ENCODE measurements at regions of chr19 and their contacts with region 1.

Region 1: DNA sequence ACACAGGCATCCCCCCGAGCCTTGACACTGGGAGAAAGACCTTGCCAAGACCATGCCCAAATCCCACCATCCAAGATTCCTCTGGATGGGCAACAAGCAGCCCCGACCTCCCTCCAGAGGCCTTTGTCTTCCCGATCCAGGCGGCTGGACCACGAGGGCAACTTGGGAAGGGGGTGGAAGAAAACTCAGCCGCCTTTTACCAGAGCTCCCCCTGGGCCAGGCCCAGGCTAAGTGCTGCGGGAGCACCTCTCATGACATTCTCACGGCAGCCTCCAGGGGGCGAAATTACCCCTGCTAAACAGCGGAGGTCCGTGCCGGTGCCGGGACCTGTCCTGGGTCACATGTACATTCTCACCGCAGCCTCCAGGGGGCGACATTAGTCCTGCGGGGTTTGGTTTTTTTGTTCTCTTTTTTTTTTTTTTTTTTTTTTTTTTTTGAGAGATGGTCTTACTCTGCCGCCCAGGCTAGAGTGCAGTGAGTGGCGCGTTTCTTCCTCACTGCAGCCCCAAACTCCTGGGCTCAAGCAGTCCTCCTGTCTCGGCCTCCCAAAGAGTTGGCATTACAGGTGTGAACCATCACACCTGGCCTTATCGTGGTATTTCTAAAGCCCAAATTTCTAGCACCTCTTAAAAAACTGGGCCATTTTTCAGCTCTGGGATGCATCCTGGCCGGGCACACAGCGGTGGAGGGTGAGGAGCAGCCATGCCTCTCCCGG is 2.1 kb upstream of the RSPH6A start:
- DNase-seq: peak; percentile 98
- H3K4me3 Mint-ChIP-seq: no peak overlapping the region
- H3K27ac Mint-ChIP-seq: no peak overlapping the region
- H3K4me1 Mint-ChIP-seq: no peaks in the 10 kb centered on the region
- H3K27me3 Mint-ChIP-seq: no peaks in the 10 kb centered on the region
- CTCF ChIP-seq: peak; percentile 97

Region 2: DNA sequence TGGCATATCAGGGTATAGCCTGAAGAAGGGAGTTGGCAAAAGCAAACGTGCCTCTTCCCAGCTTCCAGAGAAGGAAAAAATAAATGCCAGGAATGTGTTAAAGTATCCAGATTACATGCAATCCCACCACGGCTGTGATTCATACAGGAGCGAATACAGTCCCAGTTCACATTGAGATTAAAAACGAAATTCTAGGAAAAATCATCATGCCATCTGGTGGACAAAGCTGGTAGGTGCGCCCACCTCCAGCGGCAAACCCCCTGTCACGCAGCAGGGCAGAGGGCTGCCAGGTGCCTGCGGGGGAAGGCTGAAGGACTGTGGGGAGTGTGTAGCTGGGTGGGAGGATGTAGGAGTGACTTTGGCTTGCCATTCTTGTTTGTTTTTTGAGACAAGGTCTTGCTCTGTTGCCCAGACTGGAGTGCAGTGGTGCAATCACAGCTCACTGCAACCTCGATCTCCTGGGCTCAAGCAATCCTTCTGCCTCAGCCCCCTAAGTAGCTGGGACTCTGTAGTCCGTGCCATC is 18.1 kb before region 1 on chr19:
- CTCF ChIA-PET with region 1: interaction called, 14 read pairs
- intact Hi-C with region 1: no loop called
- DNase-seq: peak; percentile 77
- H3K4me3 Mint-ChIP-seq: no peak overlapping the region
- H3K27ac Mint-ChIP-seq: no peak overlapping the region
- H3K4me1 Mint-ChIP-seq: peaks cover 9% of the 10 kb centered on the region
- H3K27me3 Mint-ChIP-seq: peaks cover 22% of the 10 kb centered on the region
- CTCF ChIP-seq: peak; percentile 83

Region 3: GRCh38 chr19:45862564-45863334 is 45.6 kb after region 1 on chr19 and contains the start of gene SYMPK:
- CTCF ChIA-PET with region 1: interaction called, 12 read pairs
- intact Hi-C with region 1: no loop called
- DNase-seq: peak; percentile 100
- H3K4me3 Mint-ChIP-seq: peak within 1 kb of the TSS; percentile 98
- H3K27ac Mint-ChIP-seq: peak within 1 kb of the TSS; percentile 96
- H3K4me1 Mint-ChIP-seq: peaks cover 48% of the 10 kb centered on the region
- H3K27me3 Mint-ChIP-seq: no peaks in the 10 kb centered on the region
- CTCF ChIP-seq: no peak
- total RNA-seq, gene SYMPK: 130 and 135 TPM in 2 replicates

Region 4: GRCh38 chr19:45882652-45883585 is 65.8 kb after region 1 on chr19:
- CTCF ChIA-PET with region 1: interaction called, 18 read pairs
- intact Hi-C with region 1: loop called (anchors 1 kb)
- DNase-seq: peak; percentile 97
- H3K4me3 Mint-ChIP-seq: peak overlapping the region; percentile 70
- H3K27ac Mint-ChIP-seq: peak overlapping the region; percentile 23
- H3K4me1 Mint-ChIP-seq: peaks cover 45% of the 10 kb centered on the region
- H3K27me3 Mint-ChIP-seq: no peaks in the 10 kb centered on the region
- CTCF ChIP-seq: peak; percentile 99

Measured in Calu3 (cell line).